Motor neuron (in vitro differentiated cells): ENCODE measurements at regions of chr2 and their contacts with region 1.

Region 1: GRCh38 chr2:98444436-98445176 is at the start of gene INPP4A:
- ATAC-seq: peak; percentile 42 to 98 (median 94)
- H3K4me3 ChIP-seq: peak within 1 kb of the TSS; percentile 48 to 90 (median 70)
- H3K27ac ChIP-seq: peak within 1 kb of the TSS; percentile 47 to 54
- H3K4me1 ChIP-seq: peaks cover 10 to 17% of the 10 kb centered on the region in 2 donors
- total RNA-seq, gene INPP4A: 24.2 to 111 (median 31.1) TPM

Region 2: GRCh38 chr2:98140210-98140609 is 304.4 kb before region 1 on chr2:
- in situ Hi-C with region 1: no loop called
- ATAC-seq: no peak
- H3K4me3 ChIP-seq: no peak overlapping the region
- H3K27ac ChIP-seq: no peak overlapping the region
- H3K4me1 ChIP-seq: peaks cover 0 to 5% of the 10 kb centered on the region in 2 donors

Region 3: GRCh38 chr2:98324181-98324580 is 120.4 kb before region 1 on chr2:
- in situ Hi-C with region 1: no loop called
- ATAC-seq: peak in 2 of 8 experiments; percentile 85 to 88
- H3K4me3 ChIP-seq: no peak overlapping the region
- H3K27ac ChIP-seq: no peak overlapping the region
- H3K4me1 ChIP-seq: no peaks in the 10 kb centered on the region

Region 4: GRCh38 chr2:98548920-98549818 is 104.6 kb after region 1 on chr2:
- in situ Hi-C with region 1: loop called in 1 of 9 experiments (anchors 25 kb)
- ATAC-seq: no peak
- H3K4me3 ChIP-seq: no peak overlapping the region
- H3K27ac ChIP-seq: no peak overlapping the region
- H3K4me1 ChIP-seq: no peaks in the 10 kb centered on the region